ENCODE measurements at regions of chr9 and their contacts with region 1.

Region 1: DNA sequence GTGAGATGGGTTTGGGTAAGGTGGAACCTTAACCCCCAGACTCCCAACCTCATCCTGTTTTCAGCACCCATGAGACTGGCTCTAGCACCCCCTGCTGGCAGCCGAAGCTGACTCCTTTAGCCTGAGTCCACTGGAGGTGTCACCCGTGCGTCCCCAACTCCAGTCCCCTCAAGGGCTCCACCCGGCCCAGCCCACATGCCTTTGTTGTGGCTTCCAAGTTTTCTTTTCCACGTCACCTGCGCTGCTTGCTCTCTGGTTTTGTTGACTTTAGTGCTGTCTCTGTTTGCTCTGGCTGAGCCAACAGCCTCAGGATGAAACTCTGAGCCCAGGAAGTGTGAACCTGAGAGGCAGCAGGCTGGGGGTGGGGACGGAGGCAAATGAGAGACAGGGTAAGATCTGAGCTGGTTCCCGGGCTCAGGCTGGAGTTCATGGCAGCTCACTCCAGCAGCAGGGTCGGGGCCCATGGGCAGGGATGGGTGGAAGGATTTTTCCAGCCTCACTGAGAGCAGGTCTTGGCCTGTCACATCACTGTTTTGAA is 13.2 kb upstream of the AQP7 start:
- DNase-seq: peak; percentile 92 to 93
- H3K4me3 ChIP-seq: no peak overlapping the region
- H3K27ac ChIP-seq: peak overlapping the region in 1 of 3 donors; percentile 51
- H3K4me1 ChIP-seq: peaks cover 13 to 18% of the 10 kb centered on the region in 2 donors
- H3K27me3 ChIP-seq: no peaks in the 10 kb centered on the region
- CTCF ChIP-seq: peak; percentile 48 to 85 (median 79)
- POLR2A ChIP-seq: no peak

Region 2: GRCh38 chr9:33374634-33375213 is 40.8 kb before region 1 on chr9:
- intact Hi-C with region 1: loop called (anchors 2 kb)
- DNase-seq: peak; percentile 80 to 83
- H3K4me3 ChIP-seq: no peak overlapping the region
- H3K27ac ChIP-seq: no peak overlapping the region
- H3K4me1 ChIP-seq: peaks cover 9% of the 10 kb centered on the region in 2 donors
- H3K27me3 ChIP-seq: no peaks in the 10 kb centered on the region
- CTCF ChIP-seq: peak; percentile 58 to 90 (median 82)
- POLR2A ChIP-seq: no peak

Region 3: GRCh38 chr9:33458444-33458843 is 42.9 kb after region 1 on chr9:
- intact Hi-C with region 1: no loop called
- DNase-seq: no peak
- H3K4me3 ChIP-seq: no peak overlapping the region
- H3K27ac ChIP-seq: no peak overlapping the region
- H3K4me1 ChIP-seq: no peaks in the 10 kb centered on the region
- H3K27me3 ChIP-seq: no peaks in the 10 kb centered on the region
- CTCF ChIP-seq: no peak
- POLR2A ChIP-seq: no peak